Gastrocnemius medialis (tissue), 4 donors: ENCODE measurements at regions of chr19 and their contacts with region 1.

Region 1: GRCh38 chr19:16462757-16463250 is 9.0 kb downstream of the EPS15L1 start:
- DNase-seq: peak; percentile 94 to 97
- ATAC-seq: peak; percentile 50 to 52
- H3K4me3 ChIP-seq: peak overlapping the region in 2 of 4 donors; percentile 9 to 23
- H3K27ac ChIP-seq: peak overlapping the region; percentile 91 to 99 (median 96)
- H3K4me1 ChIP-seq: peaks cover 90 to 92% of the 10 kb centered on the region in 2 donors
- H3K27me3 ChIP-seq: no peaks in the 10 kb centered on the region
- CTCF ChIP-seq: peak in 1 of 5 experiments; percentile 44
- POLR2A ChIP-seq: peak; percentile 81 to 83

Region 2: DNA sequence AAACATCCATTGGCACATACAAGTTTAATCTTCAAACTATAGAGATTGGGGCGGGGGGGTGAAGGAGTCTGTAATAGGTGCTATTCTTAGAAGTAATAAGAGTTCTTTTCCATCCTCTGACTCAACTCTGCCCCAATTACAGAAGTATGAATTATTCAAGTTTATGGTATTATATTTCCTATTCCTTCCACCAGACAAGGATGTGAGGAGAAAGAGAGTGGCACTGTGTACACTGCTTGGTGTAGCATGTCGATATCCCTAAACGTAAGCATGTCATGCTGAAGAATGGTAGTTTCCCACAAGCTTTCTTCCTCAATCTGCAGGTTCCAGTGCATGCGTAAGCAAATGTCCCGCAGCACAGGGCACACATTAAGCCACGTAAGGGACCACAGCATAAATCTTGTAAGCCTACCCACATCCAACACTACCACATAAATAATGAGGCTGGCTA is 1144.5 kb before region 1 on chr19:
- in situ Hi-C with region 1: no loop called
- intact Hi-C with region 1: loop called (anchors 10 kb)
- DNase-seq: no peak
- ATAC-seq: peak; percentile 45 to 53
- H3K4me3 ChIP-seq: peak overlapping the region in 1 of 4 donors; percentile 7
- H3K27ac ChIP-seq: peak overlapping the region; percentile 77 to 98 (median 90)
- H3K4me1 ChIP-seq: peaks cover 96 to 98% of the 10 kb centered on the region in 2 donors
- H3K27me3 ChIP-seq: no peaks in the 10 kb centered on the region
- CTCF ChIP-seq: no peak
- POLR2A ChIP-seq: no peak

Region 3: GRCh38 chr19:16382775-16383543 is 79.8 kb before region 1 on chr19:
- in situ Hi-C with region 1: no loop called
- intact Hi-C with region 1: no loop called
- DNase-seq: peak; percentile 79 to 87
- ATAC-seq: peak; percentile 62 to 79
- H3K4me3 ChIP-seq: peak overlapping the region in 2 of 4 donors; percentile 7 to 12
- H3K27ac ChIP-seq: peak overlapping the region; percentile 82 to 92 (median 90)
- H3K4me1 ChIP-seq: peaks cover 46 to 58% of the 10 kb centered on the region in 2 donors
- H3K27me3 ChIP-seq: no peaks in the 10 kb centered on the region
- CTCF ChIP-seq: peak; percentile 89 to 93 (median 90)
- POLR2A ChIP-seq: peak; percentile 30 to 61

Region 4: DNA sequence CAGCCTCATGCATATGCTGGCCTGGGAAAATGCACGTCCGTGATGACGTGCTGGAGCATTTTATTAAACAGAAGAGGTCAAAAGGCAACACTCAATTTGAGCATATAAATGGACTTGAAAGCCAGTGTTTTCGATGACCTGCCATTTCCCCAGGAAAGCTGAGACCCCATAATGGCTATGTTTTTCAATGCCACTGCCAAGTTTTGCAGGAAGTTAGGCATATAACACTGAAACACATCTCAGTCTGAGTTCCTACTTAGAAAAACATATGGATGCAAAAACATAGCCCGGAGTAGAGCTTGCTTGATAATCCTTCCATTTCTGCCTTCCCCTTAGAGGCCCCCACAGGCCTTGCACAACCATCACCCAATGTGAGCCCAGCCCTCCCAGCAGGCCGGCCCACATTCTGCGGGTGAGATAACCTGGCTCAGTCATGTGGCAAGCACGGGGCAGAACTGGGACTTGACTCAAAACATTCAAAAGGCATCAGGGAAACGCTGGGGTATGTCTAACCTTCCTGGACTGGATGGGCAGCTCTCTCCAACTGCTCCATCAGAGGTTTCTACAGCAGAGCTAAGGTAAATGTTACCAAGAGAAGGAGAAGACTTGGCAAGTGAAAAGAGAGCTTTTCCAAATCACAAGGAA is 16.0 kb before region 1 on chr19:
- in situ Hi-C with region 1: no loop called
- intact Hi-C with region 1: loop called (anchors 2 kb)
- DNase-seq: peak; percentile 83 to 89
- ATAC-seq: peak; percentile 68 to 82
- H3K4me3 ChIP-seq: no peak overlapping the region
- H3K27ac ChIP-seq: peak overlapping the region; percentile 91 to 99 (median 96)
- H3K4me1 ChIP-seq: peaks cover 59 to 63% of the 10 kb centered on the region in 2 donors
- H3K27me3 ChIP-seq: no peaks in the 10 kb centered on the region
- CTCF ChIP-seq: no peak
- POLR2A ChIP-seq: peak; percentile 53 to 78

Region 5: DNA sequence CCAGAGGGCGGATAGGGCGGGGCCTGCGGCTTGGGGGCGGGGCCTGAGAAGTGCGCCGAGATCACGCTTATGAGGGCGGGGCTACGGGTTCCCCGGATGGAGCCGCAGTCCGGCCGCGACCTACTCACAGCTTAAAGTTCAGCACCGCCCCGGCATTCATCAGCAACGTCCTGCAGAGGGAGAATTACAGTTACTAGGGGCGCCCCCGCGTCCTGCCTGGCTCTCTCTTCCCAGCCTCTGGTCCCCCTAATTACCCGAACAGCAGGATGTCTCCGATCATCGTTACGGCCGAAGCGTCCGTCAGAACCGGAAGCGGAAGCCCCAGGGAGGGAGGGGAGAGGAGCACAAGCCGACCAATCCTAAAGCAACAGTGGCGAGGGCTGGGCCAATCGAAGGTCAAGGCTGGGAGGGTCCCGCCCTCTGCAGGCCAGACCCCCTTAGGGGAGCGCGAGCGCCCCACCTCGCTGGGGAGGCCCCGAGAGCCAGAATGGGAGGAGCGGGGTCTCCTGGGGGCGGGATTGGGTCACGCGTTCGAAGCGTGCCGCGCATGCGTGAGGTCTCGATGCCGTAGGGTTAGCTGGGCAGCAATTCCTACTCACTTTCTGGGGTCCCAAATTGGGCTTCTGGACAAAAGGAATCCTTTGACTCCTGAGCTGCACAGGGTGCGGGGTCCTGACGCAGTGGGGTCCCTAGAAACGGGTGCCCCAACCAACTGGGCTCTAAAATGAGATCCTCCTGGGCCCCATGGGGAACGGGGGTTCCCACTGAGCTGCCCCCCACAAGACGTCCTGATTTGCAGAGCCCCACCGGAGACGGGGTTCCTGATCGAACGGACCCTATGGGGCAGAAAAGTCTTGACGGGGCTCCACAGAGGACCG is 197.3 kb after region 1 on chr19 and contains the start of gene SMIM7:
- in situ Hi-C with region 1: no loop called
- intact Hi-C with region 1: loop called (anchors 2 kb)
- DNase-seq: peak; percentile 99
- ATAC-seq: peak; percentile 80 to 90
- H3K4me3 ChIP-seq: peak within 1 kb of the TSS; percentile 75 to 95 (median 89)
- H3K27ac ChIP-seq: peak within 1 kb of the TSS; percentile 100
- H3K4me1 ChIP-seq: peaks cover 37 to 38% of the 10 kb centered on the region in 2 donors
- H3K27me3 ChIP-seq: no peaks in the 10 kb centered on the region
- CTCF ChIP-seq: peak in 2 of 5 experiments; percentile 8 to 27
- POLR2A ChIP-seq: peak; percentile 90 to 94
- total RNA-seq, gene SMIM7: 36.4 to 60.5 (median 49.8) TPM